ENCODE measurements at regions of chr13 and their contacts with region 1.

Region 1: GRCh38 chr13:36282818-36283445 is 14.7 kb downstream of the CCDC169 start:
- DNase-seq: peak; percentile 54
- H3K4me3 Mint-ChIP-seq: no peak overlapping the region
- H3K27ac Mint-ChIP-seq: no peak overlapping the region
- H3K4me1 Mint-ChIP-seq: no peaks in the 10 kb centered on the region
- H3K27me3 Mint-ChIP-seq: peaks cover 20% of the 10 kb centered on the region

Region 2: GRCh38 chr13:36261976-36262375 is 21.0 kb before region 1 on chr13:
- intact Hi-C with region 1: no loop called
- DNase-seq: no peak
- H3K4me3 Mint-ChIP-seq: no peak overlapping the region
- H3K27ac Mint-ChIP-seq: no peak overlapping the region
- H3K4me1 Mint-ChIP-seq: no peaks in the 10 kb centered on the region
- H3K27me3 Mint-ChIP-seq: peaks cover 4% of the 10 kb centered on the region

Region 3: GRCh38 chr13:36324011-36324483 is 41.1 kb after region 1 on chr13:
- intact Hi-C with region 1: no loop called
- DNase-seq: no peak
- H3K4me3 Mint-ChIP-seq: no peak overlapping the region
- H3K27ac Mint-ChIP-seq: no peak overlapping the region
- H3K4me1 Mint-ChIP-seq: peaks cover 4% of the 10 kb centered on the region
- H3K27me3 Mint-ChIP-seq: no peaks in the 10 kb centered on the region

Region 4: GRCh38 chr13:36736119-36736726 is 453.3 kb after region 1 on chr13:
- intact Hi-C with region 1: loop called (anchors 5 kb)
- DNase-seq: peak; percentile 78
- H3K4me3 Mint-ChIP-seq: no peak overlapping the region
- H3K27ac Mint-ChIP-seq: no peak overlapping the region
- H3K4me1 Mint-ChIP-seq: no peaks in the 10 kb centered on the region
- H3K27me3 Mint-ChIP-seq: peaks cover 5% of the 10 kb centered on the region